ENCODE measurements at regions of chr2 and their contacts with region 1.

Region 1: GRCh38 chr2:187581125-187581896 is 27.1 kb upstream of the TFPI start:
- DNase-seq: peak; percentile 67
- H3K4me3 ChIP-seq: peak overlapping the region in 1 of 3 experiments; percentile 34
- H3K27ac ChIP-seq: peak overlapping the region; percentile 78
- H3K4me1 ChIP-seq: peaks cover 23% of the 10 kb centered on the region
- H3K27me3 ChIP-seq: no peaks in the 10 kb centered on the region
- CTCF ChIP-seq: peak; percentile 45 to 46
- POLR2A ChIP-seq: no peak

Region 2: DNA sequence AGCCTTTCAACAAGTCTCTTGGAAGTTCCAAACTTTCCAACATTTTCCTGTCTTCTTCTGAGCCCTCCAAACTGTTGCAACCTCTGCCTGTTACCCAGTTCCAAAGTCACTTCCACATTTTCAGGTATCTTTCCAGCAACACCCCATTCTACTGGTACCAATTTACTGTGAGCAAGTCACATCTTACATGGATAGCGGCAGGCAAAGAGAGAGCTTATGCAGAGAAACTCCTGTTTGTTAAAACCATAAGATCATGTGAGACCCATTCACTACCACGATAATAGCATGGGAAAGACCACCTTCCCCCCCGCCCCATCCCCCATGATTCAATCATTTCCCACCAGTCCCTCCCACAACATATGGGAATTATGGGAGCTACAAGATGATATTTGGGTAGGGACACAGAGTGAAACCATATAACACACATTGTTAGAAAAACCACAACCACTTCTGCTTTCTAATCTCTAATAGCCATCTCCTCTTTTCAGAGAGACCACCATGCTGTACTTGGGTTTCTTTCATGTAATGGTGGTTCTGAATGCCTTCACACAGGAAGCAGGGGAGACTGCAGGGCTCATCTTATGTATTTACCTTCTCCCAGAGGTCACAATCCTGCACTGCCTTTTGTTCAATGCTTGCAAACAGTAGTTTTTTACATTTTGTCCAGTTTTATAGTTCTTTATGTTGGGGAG is 87.3 kb before region 1 on chr2:
- CTCF ChIA-PET with region 1: interaction called, 598 read pairs
- POLR2A ChIA-PET with region 1: no interaction called
- dilution Hi-C with region 1: no loop called
- intact Hi-C with region 1: no loop called
- DNase-seq: no peak
- H3K4me3 ChIP-seq: no peak overlapping the region
- H3K27ac ChIP-seq: no peak overlapping the region
- H3K4me1 ChIP-seq: peaks cover 14% of the 10 kb centered on the region
- H3K27me3 ChIP-seq: no peaks in the 10 kb centered on the region
- CTCF ChIP-seq: no peak
- POLR2A ChIP-seq: no peak

Region 3: DNA sequence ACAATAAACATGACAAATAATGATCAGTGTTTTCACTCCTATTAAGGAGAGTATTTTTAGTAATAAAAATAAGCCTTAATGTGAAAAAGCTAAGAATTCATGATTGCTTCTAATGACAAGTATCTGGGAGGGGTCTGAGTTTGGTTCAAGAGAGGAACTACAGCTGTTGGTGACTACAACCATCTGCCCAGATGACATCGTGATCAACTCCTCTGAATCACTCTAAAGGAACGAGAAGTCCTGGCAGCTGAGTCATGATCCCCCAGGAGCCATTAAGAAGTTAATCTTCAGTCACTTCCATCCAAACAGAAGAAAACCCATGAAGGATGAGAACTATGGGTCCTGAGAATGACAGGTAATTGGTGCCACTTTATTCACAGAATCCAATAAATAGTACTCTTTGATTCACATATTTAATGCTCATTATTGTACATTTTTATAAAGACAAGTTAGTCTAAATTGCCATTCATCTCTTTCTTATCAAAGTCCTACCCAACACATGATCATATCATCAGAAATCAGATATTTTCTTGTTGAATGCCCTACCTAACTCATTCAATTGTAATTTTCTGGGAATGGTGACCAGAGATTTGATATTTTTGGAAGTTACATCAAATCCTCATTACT is 33.8 kb before region 1 on chr2:
- CTCF ChIA-PET with region 1: interaction called, 45 read pairs
- POLR2A ChIA-PET with region 1: interaction called, 3 read pairs
- dilution Hi-C with region 1: no loop called
- intact Hi-C with region 1: no loop called
- DNase-seq: peak; percentile 91
- H3K4me3 ChIP-seq: peak overlapping the region in 1 of 3 experiments; percentile 22
- H3K27ac ChIP-seq: peak overlapping the region; percentile 61
- H3K4me1 ChIP-seq: peaks cover 91% of the 10 kb centered on the region
- H3K27me3 ChIP-seq: no peaks in the 10 kb centered on the region
- CTCF ChIP-seq: no peak
- POLR2A ChIP-seq: peak; percentile 70

Region 4: GRCh38 chr2:187842978-187843847 is 261.9 kb after region 1 on chr2:
- CTCF ChIA-PET with region 1: interaction called, 163 read pairs
- POLR2A ChIA-PET with region 1: no interaction called
- dilution Hi-C with region 1: no loop called
- intact Hi-C with region 1: loop called (anchors 1 kb)
- DNase-seq: peak; percentile 75
- H3K4me3 ChIP-seq: no peak overlapping the region
- H3K27ac ChIP-seq: no peak overlapping the region
- H3K4me1 ChIP-seq: no peaks in the 10 kb centered on the region
- H3K27me3 ChIP-seq: no peaks in the 10 kb centered on the region
- CTCF ChIP-seq: peak; percentile 39 to 43
- POLR2A ChIP-seq: no peak

Region 5: DNA sequence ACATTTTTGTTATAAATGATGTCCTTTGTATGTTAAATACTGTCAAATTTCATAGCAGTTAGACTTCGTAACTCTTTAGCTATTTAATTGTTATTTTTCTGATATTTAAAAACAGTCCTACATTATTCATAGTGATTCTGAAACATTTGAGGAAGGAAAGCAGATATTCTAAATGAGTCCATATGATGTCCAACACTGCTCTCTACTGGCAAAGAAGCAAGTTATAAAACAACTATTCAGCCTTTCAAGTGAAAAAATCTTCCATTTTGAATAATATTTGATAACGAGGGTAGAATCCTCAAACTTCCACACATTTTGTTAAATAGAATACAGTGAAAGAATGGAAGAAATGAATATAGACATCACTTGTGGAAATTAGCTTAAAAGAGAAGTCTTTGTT is 931.1 kb after region 1 on chr2:
- CTCF ChIA-PET with region 1: interaction called, 53 read pairs
- POLR2A ChIA-PET with region 1: no interaction called
- dilution Hi-C with region 1: no loop called
- intact Hi-C with region 1: loop called (anchors 1 kb)
- DNase-seq: peak; percentile 69
- H3K4me3 ChIP-seq: no peak overlapping the region
- H3K27ac ChIP-seq: no peak overlapping the region
- H3K4me1 ChIP-seq: peaks cover 2% of the 10 kb centered on the region
- H3K27me3 ChIP-seq: no peaks in the 10 kb centered on the region
- CTCF ChIP-seq: peak; percentile 9 to 32
- POLR2A ChIP-seq: no peak

Measured in endothelial cell of umbilical vein (primary cell).